ENCODE measurements at regions of chr19 and their contacts with region 1.

Region 1: DNA sequence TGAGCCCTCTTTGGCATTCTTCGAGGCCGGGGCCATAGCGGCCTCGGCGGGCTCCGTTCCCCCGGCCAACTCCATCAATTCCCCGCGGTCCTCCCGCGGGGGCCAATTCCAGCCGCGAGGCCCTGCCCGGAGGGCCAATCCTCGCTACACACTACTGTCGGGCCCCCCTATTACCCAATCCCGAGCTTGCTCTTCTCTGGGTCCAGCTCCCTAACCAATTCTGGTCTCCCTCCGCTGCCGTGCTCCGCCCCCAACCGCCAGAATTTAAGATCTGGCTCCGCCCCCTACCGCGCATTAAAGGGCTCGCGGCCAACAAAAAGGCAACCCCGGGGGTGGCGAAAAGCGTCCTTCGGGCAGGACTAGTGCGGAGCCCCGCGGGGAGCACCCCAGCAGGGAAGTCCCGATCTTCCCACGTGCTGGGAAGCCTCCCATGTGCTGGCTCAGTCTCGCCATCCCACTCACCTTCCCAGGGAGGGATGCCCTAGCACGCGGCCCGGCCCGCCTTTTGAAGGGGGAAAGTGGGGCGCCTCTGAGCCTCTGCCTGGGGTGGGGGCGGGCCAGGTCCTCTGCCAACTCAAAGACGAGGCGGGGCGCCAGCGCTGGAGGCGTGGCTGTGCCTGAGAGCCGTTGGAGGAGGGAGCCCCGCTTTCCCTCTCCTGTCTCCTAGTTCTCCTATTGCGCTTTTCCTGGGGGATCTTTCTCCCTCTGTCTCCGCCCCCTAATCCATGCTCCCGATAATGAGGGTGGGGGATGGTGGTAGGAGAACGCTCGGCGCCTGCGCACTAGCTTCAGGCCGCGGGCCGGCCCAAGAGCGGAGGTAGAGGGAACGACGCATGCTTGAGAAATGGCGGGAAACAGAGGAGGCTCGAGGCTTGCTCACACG is 3.5 kb downstream of the LIPE start:
- DNase-seq: peak; percentile 95
- H3K4me3 ChIP-seq: peak overlapping the region; percentile 81
- H3K4me3 Mint-ChIP-seq: peak overlapping the region; percentile 86
- H3K27ac Mint-ChIP-seq: peak overlapping the region; percentile 28
- H3K4me1 ChIP-seq: peaks cover 14% of the 10 kb centered on the region
- H3K4me1 Mint-ChIP-seq: peaks cover 20% of the 10 kb centered on the region
- H3K27me3 ChIP-seq: no peaks in the 10 kb centered on the region
- H3K27me3 Mint-ChIP-seq: no peaks in the 10 kb centered on the region
- CTCF ChIP-seq: no peak

Region 2: DNA sequence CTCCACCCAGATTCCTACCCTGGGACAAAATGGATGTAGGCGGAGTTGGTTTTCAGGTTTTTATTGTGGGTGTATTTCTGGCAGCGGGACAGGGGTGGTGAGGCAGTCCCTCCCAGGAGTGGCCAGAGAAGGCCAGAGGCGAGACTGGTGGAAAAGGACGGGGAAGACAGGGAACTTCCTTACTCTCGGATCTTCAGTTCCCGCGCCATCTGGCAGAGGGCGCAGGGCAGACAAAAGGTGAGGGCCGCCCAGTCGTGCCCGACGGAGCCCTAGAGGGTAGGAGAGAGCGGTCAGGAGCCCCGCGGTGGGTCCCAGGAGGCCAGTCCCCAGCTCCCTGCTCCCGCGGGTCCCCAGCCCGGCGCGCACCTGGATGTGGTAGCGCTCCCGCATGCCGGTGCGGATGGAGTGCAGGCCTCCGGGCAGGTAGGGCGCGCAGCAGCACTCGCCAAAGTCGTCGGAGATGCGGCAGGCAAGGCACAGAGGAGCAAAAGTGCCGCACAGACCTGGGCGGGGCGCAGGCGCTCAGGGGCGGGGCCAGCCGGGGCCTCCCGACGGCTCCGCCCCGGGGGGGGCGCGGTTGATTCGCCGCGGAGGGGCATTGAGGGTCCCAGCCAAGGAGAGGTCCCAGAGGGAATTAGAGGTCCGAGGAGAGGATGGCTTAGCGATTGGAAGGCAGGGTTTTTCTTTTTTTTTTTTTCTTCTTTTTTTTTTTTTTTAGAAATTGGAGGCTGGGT is 36.6 kb before region 1 on chr19:
- CTCF ChIA-PET with region 1: interaction called, 5 read pairs
- POLR2A ChIA-PET with region 1: interaction called, 4 read pairs
- intact Hi-C with region 1: loop called (anchors 1 kb)
- DNase-seq: peak; percentile 88 to 92
- H3K4me3 ChIP-seq: peak overlapping the region; percentile 45
- H3K4me3 Mint-ChIP-seq: peak overlapping the region; percentile 82
- H3K27ac Mint-ChIP-seq: peak overlapping the region; percentile 83
- H3K4me1 ChIP-seq: 0 out of 2 replicates have a peak, but pooled peaks cover 3% of the 10 kb centered on the region
- H3K4me1 Mint-ChIP-seq: peaks cover 19% of the 10 kb centered on the region
- H3K27me3 ChIP-seq: peaks cover 2% of the 10 kb centered on the region; the same call in 1 of the 2 replicates
- H3K27me3 Mint-ChIP-seq: peaks cover 19% of the 10 kb centered on the region
- CTCF ChIP-seq: peak; percentile 83 to 85

Region 3: GRCh38 chr19:42396381-42397262 is 27.1 kb before region 1 on chr19:
- CTCF ChIA-PET with region 1: interaction called, 13 read pairs
- POLR2A ChIA-PET with region 1: interaction called, 14 read pairs
- intact Hi-C with region 1: no loop called
- DNase-seq: peak; percentile 100
- H3K4me3 ChIP-seq: peak overlapping the region; percentile 64
- H3K4me3 Mint-ChIP-seq: peak overlapping the region; percentile 97
- H3K27ac Mint-ChIP-seq: peak overlapping the region; percentile 85
- H3K4me1 ChIP-seq: 0 out of 2 replicates have a peak, but pooled peaks cover 9% of the 10 kb centered on the region
- H3K4me1 Mint-ChIP-seq: peaks cover 34% of the 10 kb centered on the region
- H3K27me3 ChIP-seq: no peaks in the 10 kb centered on the region; the same call in 1 of the 2 replicates
- H3K27me3 Mint-ChIP-seq: peaks cover 4% of the 10 kb centered on the region
- CTCF ChIP-seq: no peak

Region 4: DNA sequence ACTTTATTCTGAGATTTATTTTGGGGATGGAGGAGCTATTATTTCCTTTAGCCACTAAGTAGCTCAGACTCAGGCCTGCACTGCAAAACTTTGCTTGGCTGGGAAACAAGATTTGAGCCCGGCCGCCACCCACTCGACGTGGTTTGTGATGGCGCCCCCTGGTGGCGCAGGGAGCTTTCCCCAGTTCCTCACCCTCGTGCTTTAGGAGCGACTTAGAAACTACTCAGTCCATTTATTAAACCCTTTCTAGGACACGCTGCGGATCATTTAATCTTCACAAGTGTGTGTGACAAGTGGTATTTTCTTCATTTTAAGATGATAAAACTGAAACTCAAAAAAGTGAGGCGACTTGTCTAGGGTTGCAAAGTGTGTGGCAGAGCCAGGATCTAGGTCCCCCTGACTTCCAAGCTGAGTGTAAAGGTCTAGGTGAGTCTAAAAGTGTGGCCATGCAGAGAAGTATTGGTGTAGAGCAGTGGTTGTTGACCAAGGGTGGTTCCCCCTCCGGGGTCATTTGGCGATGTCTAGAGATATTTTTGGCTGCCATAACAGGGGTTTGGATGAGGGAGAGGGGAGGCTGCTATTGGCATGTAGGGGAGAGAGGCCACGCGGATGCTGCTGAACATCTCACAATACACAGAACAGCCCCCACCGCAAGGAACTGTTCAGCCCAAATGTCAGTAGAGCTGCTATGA is 16.8 kb after region 1 on chr19:
- CTCF ChIA-PET with region 1: interaction called, 23 read pairs
- POLR2A ChIA-PET with region 1: interaction called, 16 read pairs
- intact Hi-C with region 1: no loop called
- DNase-seq: peak; percentile 72 to 82
- H3K4me3 ChIP-seq: no peak overlapping the region
- H3K4me3 Mint-ChIP-seq: peak overlapping the region; percentile 20
- H3K27ac Mint-ChIP-seq: peak overlapping the region; percentile 61
- H3K4me1 ChIP-seq: peaks cover 55% of the 10 kb centered on the region
- H3K4me1 Mint-ChIP-seq: peaks cover 42% of the 10 kb centered on the region
- H3K27me3 ChIP-seq: no peaks in the 10 kb centered on the region
- H3K27me3 Mint-ChIP-seq: no peaks in the 10 kb centered on the region
- CTCF ChIP-seq: peak; percentile 88 to 96

Region 5: DNA sequence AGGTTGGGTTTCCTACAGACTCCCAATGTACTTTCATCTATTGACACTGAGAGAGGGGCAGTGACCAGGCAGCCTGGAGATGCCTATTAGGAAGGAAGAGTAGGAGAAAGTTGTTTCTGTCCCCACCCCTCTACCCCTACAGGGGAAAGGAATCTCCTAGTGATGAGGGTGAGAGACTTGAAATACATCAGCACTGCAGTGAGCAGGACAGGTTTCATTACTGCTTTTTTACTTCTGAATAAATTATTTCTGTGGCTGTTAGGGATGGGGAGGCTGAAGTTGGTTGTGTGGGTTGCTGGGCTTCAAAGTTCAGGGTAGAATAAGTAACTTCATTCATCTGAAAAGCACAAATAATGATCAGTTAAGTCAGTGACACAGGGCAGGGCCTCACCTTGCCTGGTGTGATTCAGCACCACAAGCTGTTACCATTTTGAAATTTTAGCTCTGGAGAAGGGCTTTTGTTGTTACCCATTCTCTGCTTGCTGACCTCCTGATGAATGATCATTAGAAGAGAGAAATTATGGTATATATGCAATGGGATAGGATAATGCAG is 85.3 kb after region 1 on chr19:
- CTCF ChIA-PET with region 1: no interaction called
- POLR2A ChIA-PET with region 1: no interaction called
- intact Hi-C with region 1: no loop called
- DNase-seq: no peak
- H3K4me3 ChIP-seq: no peak overlapping the region
- H3K4me3 Mint-ChIP-seq: no peak overlapping the region
- H3K27ac Mint-ChIP-seq: no peak overlapping the region
- H3K4me1 ChIP-seq: no peaks in the 10 kb centered on the region
- H3K4me1 Mint-ChIP-seq: peaks cover 5% of the 10 kb centered on the region
- H3K27me3 ChIP-seq: no peaks in the 10 kb centered on the region
- H3K27me3 Mint-ChIP-seq: no peaks in the 10 kb centered on the region
- CTCF ChIP-seq: no peak

Region 6: DNA sequence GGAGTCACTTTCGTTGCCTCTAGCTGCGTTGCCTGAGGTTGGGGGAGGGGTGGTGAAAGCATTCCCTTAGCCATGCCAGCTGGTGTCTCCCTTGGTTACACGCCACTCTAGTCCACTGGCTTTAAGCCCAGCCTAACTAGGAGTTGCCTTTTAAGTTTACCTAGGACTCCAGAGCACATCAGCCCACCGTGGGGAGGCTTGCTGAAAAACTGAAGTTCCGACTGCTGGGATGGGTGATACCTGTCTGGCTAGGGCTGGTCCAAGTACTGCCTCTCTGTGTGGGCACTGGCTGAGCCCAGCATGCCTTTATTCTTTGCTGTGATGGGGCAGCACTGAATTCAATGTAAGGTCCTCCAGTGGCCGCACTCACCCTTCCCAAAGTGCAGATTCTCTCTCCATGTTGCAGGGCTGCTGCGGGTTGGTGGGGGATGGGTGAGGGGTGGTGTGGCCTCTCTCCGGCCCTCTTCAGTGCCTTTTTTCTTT is 116.4 kb after region 1 on chr19:
- CTCF ChIA-PET with region 1: no interaction called
- POLR2A ChIA-PET with region 1: no interaction called
- intact Hi-C with region 1: no loop called
- DNase-seq: no peak
- H3K4me3 ChIP-seq: no peak overlapping the region
- H3K4me3 Mint-ChIP-seq: no peak overlapping the region
- H3K27ac Mint-ChIP-seq: no peak overlapping the region
- H3K4me1 ChIP-seq: no peaks in the 10 kb centered on the region
- H3K4me1 Mint-ChIP-seq: peaks cover 6% of the 10 kb centered on the region
- H3K27me3 ChIP-seq: no peaks in the 10 kb centered on the region
- H3K27me3 Mint-ChIP-seq: no peaks in the 10 kb centered on the region
- CTCF ChIP-seq: no peak

Region 7: DNA sequence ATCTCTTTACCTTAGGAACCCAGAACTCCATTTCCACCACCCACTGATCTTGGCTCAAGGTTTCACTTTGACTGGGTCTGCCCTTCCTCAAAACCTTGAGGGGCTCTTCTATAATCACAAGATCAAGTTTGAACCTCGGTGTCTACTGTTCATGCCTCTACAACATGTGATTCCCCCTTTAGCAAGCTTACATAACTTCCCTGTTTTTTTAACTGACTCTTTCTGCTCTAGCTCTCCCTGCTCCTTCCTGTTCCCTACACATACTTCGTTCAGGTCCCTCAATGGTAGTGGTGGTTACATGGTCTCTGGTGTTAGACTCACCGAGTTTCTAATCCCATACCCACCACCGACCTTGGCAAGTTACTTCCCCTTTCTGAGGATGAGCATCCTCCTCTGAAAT is 144.3 kb after region 1 on chr19:
- CTCF ChIA-PET with region 1: no interaction called
- POLR2A ChIA-PET with region 1: no interaction called
- intact Hi-C with region 1: no loop called
- DNase-seq: no peak
- H3K4me3 ChIP-seq: no peak overlapping the region
- H3K4me3 Mint-ChIP-seq: no peak overlapping the region
- H3K27ac Mint-ChIP-seq: no peak overlapping the region
- H3K4me1 ChIP-seq: no peaks in the 10 kb centered on the region
- H3K4me1 Mint-ChIP-seq: no peaks in the 10 kb centered on the region
- H3K27me3 ChIP-seq: no peaks in the 10 kb centered on the region
- H3K27me3 Mint-ChIP-seq: peaks cover 3% of the 10 kb centered on the region
- CTCF ChIP-seq: no peak